Aorta (tissue), 5 donors: ENCODE measurements at regions of chr2 and their contacts with region 1.

Region 1: DNA sequence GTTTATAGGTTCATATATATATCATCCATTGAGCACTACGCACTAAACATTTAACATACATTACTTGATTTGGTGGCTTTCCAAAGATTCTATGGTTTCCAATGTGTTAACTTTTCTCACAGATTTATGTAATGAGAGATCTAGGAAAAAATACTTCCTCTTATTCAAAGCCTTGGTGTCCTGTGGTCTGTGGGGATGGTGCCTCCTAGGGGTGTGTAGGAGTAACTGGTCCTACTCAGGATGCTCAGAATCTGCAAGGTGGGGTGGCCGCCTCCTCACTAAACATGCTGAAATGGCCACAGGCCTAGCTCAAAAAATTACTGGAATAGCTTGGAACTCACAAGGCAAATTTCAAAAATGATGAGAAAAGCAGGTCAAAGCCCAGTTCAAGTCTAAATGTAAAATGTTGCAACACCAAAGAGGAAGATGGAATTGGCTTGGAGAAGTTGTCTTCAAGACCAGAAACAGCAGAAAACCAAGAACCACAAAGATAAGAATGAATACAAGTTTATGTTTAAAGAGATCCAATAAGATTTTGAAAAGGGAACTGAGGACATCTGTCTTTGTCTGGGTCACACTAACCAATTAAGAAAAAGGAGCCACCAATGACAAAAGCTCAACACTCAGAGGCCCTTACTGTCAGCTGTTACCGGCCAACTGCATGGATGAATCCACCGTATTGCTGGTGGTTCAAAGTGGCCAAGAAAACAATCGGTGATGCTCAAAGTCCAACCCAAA is 11.5 kb downstream of the GPR55 start:
- DNase-seq: peak; percentile 24 to 61
- ATAC-seq: no peak
- H3K4me3 ChIP-seq: no peak overlapping the region
- H3K27ac ChIP-seq: no peak overlapping the region
- H3K4me1 ChIP-seq: no peaks in the 10 kb centered on the region
- H3K27me3 ChIP-seq: no peaks in the 10 kb centered on the region

Region 2: GRCh38 chr2:230824406-230824978 is 89.1 kb before region 1 on chr2:
- intact Hi-C with region 1: loop called in 1 of 2 experiments (anchors 5 kb)
- DNase-seq: no peak
- ATAC-seq: peak; percentile 84
- H3K4me3 ChIP-seq: no peak overlapping the region
- H3K27ac ChIP-seq: no peak overlapping the region
- H3K4me1 ChIP-seq: no peaks in the 10 kb centered on the region
- H3K27me3 ChIP-seq: no peaks in the 10 kb centered on the region

Region 3: GRCh38 chr2:230847883-230848388 is 65.6 kb before region 1 on chr2:
- intact Hi-C with region 1: loop called in 1 of 2 experiments (anchors 2 kb)
- DNase-seq: peak; percentile 93 to 97
- ATAC-seq: peak; percentile 90
- H3K4me3 ChIP-seq: peak overlapping the region in 1 of 2 donors; percentile 4
- H3K27ac ChIP-seq: no peak overlapping the region
- H3K4me1 ChIP-seq: no peaks in the 10 kb centered on the region
- H3K27me3 ChIP-seq: no peaks in the 10 kb centered on the region

Region 4: DNA sequence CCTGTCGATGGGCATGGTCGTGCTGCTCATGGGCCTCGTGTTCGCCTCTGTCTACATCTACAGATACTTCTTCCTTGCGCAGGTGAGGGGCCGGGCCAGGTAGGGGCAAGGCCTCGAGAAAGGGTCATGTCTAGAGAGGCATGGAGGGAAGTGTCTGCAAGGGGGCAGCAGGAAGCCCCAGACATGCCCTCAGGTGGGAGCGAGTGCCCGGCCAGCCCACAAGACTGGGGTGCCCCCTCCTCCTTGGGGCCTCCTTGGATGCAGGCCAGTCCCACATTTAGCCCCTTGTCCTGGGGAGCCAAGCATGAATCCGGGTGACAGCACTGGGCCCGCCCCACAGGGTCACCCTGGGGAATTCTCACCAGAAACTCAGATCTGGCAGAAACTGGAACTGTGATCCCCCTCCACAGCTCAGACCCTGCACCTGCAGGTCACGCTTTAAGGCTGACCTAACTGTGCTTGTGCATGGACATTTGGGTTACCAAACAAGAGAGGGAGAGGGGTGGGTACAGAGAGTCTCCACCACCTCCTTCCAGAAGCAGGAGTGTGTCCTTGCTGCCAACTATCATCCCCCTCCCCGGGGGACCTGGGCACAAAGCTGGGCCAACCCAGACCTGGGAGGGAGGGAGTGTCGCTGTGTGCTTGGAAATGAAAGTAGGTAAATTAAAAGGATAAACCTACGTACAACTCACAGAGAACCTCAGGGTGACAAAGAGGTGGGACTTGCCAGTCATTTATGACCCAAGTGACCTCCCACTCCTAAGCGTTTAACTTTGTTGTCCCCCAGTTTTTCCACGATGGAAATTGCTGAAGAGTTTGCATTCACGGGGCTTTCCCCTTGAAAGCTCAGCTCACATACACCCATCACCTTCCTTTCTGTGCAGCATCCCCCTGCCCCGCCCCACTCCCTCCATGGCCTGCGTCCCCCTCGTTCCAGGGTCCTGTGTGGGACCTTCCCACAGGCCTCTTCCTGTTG is 39.8 kb before region 1 on chr2:
- intact Hi-C with region 1: no loop called
- DNase-seq: peak in 1 of 2 donors; percentile 30
- ATAC-seq: no peak
- H3K4me3 ChIP-seq: no peak overlapping the region
- H3K27ac ChIP-seq: no peak overlapping the region
- H3K4me1 ChIP-seq: peaks cover 0 to 4% of the 10 kb centered on the region in 2 donors
- H3K27me3 ChIP-seq: no peaks in the 10 kb centered on the region

Region 5: DNA sequence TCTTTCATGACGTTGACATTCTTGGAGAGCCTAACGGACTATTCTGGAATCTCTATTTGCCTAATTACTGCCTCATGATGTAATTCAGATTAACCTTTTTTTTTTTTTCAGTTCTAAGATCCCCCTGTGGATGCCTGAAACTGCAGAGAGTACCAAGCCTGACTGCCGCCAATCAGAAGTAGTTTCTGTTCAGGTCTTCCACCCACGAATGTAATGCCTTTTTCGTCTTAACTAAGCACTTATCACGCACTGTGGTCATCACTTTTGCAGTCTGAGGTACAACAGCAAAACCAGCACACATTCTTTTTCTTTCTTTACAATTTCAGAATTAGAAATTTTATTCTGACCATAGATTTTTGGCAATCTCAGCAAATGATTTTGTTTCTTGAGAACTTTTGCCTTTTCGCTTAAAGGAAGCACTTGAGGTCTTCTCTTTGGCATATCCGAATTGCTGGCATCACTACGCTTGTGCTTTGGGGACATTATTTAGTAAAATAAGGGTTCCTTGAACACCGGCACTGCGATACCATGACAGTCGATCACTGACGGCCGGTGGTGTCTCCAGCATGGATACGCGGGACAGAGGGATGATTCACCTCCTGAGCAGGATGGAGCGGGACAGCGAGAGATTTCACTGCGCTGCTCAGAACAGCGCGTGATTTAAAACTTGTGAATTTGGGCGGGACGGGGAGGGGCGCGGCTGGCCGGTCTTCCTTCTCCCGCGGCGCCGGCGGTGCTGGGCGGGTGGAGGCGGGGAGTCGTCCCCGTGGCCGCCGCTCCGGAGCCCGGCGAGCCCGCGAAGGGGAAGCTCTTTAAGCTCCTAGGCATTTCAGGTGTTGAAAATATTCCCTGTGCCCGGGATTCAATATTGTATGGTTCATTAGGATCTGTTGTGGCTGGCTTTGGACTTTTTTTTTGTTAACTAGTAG is 43.5 kb after region 1 on chr2:
- intact Hi-C with region 1: no loop called
- DNase-seq: peak; percentile 61 to 84
- ATAC-seq: peak; percentile 63
- H3K4me3 ChIP-seq: peak overlapping the region in 1 of 2 donors; percentile 41
- H3K27ac ChIP-seq: no peak overlapping the region
- H3K4me1 ChIP-seq: peaks cover 0 to 2% of the 10 kb centered on the region in 2 donors
- H3K27me3 ChIP-seq: no peaks in the 10 kb centered on the region